Activated CD4-positive, alpha-beta T cell treated with anti-CD3 and anti-CD28 coated beads, Interleukin-2, amount 10 ng/mL, durations not matched to agents 7 days and 5 days (primary cell): ENCODE measurements at regions of chr16 and their contacts with region 1.

Region 1: DNA sequence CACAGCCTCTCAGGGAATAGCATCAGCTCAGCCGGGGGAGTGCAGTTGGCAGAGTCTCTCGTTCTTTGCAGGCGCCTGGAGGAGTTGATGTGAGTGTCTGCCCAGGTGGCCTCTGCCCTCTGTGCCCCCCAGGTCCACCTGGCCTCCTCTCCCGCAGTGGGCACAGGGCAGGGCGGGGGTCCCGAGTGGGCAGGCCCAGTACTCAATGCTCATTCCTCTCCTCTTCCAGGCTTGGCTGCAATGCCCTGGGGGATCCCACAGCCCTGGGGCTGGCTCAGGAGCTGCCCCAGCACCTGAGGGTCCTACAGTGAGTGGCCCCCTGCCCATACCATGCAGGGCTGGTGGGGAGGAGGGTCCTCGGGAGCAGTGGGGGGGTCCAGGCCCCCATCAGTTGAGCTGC is 14.7 kb upstream of the CPNE2 start:
- DNase-seq: no peak
- H3K4me3 Mint-ChIP-seq: no peak overlapping the region
- H3K27ac Mint-ChIP-seq: no peak overlapping the region
- H3K4me1 Mint-ChIP-seq: peaks cover 3% of the 10 kb centered on the region
- H3K27me3 Mint-ChIP-seq: no peaks in the 10 kb centered on the region

Region 2: GRCh38 chr16:57061084-57061905 is 16.4 kb before region 1 on chr16:
- CTCF ChIA-PET with region 1: interaction called, 12 read pairs
- POLR2A ChIA-PET with region 1: no interaction called
- DNase-seq: no peak
- H3K4me3 Mint-ChIP-seq: no peak overlapping the region
- H3K27ac Mint-ChIP-seq: peak overlapping the region; percentile 26
- H3K4me1 Mint-ChIP-seq: peaks cover 2% of the 10 kb centered on the region
- H3K27me3 Mint-ChIP-seq: no peaks in the 10 kb centered on the region

Region 3: GRCh38 chr16:57066625-57067024 is 11.1 kb before region 1 on chr16:
- CTCF ChIA-PET with region 1: interaction called, 12 read pairs
- POLR2A ChIA-PET with region 1: no interaction called
- DNase-seq: no peak
- H3K4me3 Mint-ChIP-seq: no peak overlapping the region
- H3K27ac Mint-ChIP-seq: no peak overlapping the region
- H3K4me1 Mint-ChIP-seq: peaks cover 11% of the 10 kb centered on the region
- H3K27me3 Mint-ChIP-seq: no peaks in the 10 kb centered on the region